ENCODE measurements at regions of chr11 and their contacts with region 1.

Region 1: DNA sequence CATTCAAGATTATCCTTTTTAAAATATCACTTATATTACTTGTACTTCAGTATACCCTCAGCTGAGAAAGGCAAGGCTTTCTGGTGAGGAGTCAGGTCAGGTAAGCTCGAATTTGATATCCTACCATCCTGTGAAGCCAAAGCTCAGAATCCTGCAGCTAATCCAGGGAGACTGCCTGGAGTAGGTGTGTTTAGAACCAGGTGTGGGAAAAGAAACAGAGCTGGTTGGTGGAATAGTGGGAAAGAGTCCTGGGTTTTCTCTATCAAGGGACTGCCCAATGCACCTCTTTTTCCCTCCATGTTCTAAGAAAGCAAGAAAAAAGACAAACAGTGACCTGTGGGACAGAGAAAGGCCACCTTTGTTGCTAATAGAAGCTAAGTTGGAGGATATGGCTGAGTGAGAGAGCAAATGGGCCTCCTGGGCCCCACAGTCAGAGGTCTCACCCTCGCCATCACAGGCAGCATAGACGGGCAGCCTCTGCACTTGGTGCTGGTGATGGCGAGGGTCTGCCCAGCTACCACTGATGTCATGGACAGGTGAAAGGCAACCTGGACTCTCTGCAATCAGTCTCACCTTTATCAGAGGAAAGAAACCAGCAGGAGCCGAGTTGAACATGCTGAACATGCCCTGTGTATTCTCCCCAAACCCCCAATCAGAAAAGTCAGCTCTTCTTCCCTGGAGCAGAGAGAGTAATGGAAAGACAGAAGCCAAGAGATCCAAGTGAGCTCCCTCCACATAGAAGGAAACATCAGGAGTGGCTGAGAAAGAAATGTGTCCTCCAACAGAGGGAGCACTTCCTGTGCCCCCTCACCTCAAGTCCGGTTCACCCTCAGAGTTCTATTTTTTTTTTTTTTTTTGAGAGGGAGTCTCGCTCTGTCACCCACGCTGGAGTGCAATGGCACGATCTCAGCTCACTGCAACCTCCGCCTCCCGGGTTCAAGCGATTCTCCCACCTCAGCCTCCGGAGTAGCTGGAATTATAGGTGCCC is 491.3 kb downstream of the BUD13 start:
- DNase-seq: no peak
- H3K4me3 ChIP-seq: no peak overlapping the region
- H3K27ac ChIP-seq: no peak overlapping the region
- H3K4me1 ChIP-seq: no peaks in the 10 kb centered on the region
- H3K27me3 ChIP-seq: no peaks in the 10 kb centered on the region
- CTCF ChIP-seq: peak; percentile 41 to 53 (median 42)
- EP300 ChIP-seq: no peak
- POLR2A ChIP-seq: no peak
- RAD21 ChIP-seq: peak; percentile 44 to 50

Region 2: DNA sequence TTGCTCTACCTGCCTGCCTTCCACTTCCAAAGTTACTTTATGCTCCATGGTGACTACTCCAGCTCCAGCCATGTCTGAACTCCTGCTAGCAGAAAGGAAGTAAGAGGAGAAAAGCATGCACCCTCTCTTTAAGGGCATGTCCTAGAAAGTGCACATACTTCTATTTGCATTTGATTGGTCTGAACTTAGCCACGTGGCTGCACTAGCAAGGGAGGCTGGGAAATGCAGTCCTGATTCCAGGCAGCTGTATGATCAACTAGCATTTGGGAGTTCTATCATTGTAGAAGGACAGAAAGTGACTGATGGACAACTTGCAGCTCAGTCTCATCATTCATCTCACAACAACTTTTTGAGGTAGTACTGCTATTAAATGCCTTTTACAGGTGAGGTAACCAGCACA is 24.4 kb before region 1 on chr11:
- CTCF ChIA-PET with region 1: interaction called, 12 read pairs
- POLR2A ChIA-PET with region 1: no interaction called
- DNase-seq: no peak
- H3K4me3 ChIP-seq: no peak overlapping the region
- H3K27ac ChIP-seq: no peak overlapping the region
- H3K4me1 ChIP-seq: peaks cover 0 to 6% (median 0%) of the 10 kb centered on the region in 4 experiments; a peak in 3 of 7 replicates
- H3K27me3 ChIP-seq: peaks cover 0 to 2% (median 0%) of the 10 kb centered on the region in 4 experiments; a peak in 1 of 7 replicates
- CTCF ChIP-seq: no peak
- EP300 ChIP-seq: no peak
- POLR2A ChIP-seq: no peak
- RAD21 ChIP-seq: no peak

Region 3: DNA sequence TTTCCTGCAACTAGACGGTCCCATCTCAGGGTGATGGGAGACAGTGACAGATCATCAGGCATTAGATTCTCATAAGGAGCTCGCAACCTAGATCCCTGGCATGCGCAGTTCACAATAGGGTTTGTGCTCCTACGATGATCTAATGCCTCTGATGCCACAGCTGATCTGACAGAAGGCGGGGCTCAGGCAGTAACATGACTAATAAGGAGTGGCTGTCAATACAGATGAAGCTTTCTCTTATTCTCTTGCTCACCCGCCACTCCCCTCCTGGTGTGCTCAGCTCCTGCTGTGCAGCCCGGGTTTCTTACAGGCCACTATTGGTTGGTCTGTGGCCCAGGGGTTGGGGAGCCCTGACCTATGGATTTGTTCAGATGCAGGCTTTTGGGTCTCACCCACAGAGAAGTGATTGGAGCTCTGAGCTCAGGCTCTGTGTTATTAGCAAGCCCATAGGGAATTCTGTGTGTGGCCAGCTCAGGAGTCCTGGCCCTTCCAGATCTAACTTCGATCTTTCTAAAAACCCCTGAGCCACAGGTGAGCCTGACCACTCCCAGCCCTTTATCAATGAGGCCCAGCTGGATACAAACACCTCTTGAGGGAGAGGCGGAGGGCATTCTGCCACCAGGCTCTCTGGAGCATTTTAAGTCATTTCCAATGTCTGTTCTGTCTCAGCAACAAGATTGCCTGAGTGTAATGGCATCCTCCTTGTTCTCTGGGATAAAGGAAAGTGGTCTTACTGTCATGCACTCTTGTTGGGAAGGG is 139.5 kb after region 1 on chr11:
- CTCF ChIA-PET with region 1: interaction called, 18 read pairs
- POLR2A ChIA-PET with region 1: no interaction called
- DNase-seq: no peak
- H3K4me3 ChIP-seq: no peak overlapping the region
- H3K27ac ChIP-seq: no peak overlapping the region
- H3K4me1 ChIP-seq: peaks cover 1 to 16% (median 7%) of the 10 kb centered on the region in 4 experiments; a peak in 5 of 7 replicates
- H3K27me3 ChIP-seq: no peaks in the 10 kb centered on the region
- CTCF ChIP-seq: no peak
- EP300 ChIP-seq: no peak
- POLR2A ChIP-seq: no peak
- RAD21 ChIP-seq: no peak

Region 4: GRCh38 chr11:116427903-116428637 is 146.6 kb after region 1 on chr11:
- CTCF ChIA-PET with region 1: interaction called, 18 read pairs
- POLR2A ChIA-PET with region 1: no interaction called
- DNase-seq: no peak
- H3K4me3 ChIP-seq: no peak overlapping the region
- H3K27ac ChIP-seq: no peak overlapping the region
- H3K4me1 ChIP-seq: peaks cover 0 to 11% (median 4%) of the 10 kb centered on the region in 4 experiments; a peak in 4 of 7 replicates
- H3K27me3 ChIP-seq: no peaks in the 10 kb centered on the region
- CTCF ChIP-seq: no peak
- EP300 ChIP-seq: no peak
- POLR2A ChIP-seq: no peak
- RAD21 ChIP-seq: no peak

Measured in H1 (cell line).